ENCODE measurements at regions of chr18 and their contacts with region 1.

Region 1: DNA sequence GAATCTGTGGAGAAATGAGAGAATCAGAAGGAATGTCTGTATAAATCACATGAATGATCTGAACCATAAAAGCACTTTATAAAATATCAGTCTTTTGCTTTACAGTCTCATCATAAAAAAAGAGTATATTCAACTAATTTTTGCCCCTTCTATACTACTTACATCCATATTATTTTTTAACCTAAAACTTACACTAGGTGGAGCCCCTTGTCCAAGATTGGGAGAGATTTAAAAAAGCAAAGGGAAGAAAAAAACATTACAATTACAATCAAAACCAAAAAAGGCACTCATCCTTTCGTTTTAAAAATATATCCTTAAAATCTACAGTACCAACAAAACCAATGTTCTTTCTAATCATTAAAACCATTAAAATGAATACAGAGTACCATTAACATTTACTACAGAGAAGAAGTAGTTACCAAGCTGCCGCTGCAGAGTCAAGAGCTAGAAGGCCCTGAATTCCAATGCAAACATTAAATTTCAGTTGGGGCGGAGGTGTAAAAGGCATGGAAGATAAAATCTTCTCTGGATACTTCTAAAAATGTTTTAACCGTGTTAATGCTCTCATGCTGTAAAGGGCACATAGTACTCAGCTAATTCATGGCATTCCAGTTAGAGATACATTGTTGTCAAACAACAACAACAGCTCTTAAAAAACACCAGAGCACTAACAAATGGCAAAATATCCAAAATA is 56.7 kb upstream of the EPB41L3 start:
- DNase-seq: no peak
- H3K4me3 ChIP-seq: no peak overlapping the region
- H3K27ac ChIP-seq: no peak overlapping the region
- H3K4me1 ChIP-seq: no peaks in the 10 kb centered on the region
- H3K27me3 ChIP-seq: no peaks in the 10 kb centered on the region
- CTCF ChIP-seq: peak in 1 of 3 donors; percentile 9
- EP300 ChIP-seq: no peak
- POLR2A ChIP-seq: no peak

Region 2: DNA sequence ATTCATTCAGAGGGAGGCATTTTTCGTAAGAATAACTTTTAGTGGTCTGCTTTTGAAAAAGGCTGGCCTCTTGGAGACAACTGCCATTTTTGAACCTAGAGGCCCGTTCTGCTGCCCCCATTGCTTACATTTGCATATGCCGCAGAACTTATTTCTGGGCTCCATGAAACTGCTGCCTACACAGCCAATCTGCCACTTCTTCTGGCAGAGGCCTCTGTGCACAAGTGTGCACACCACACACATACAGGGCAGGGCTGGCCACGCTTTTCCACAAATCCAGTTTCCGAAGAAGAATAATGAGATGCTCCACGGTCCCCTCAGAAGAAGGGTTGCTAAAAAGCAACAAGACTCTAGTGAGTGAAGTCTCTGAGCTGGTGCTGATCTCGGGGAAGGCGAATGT is 238.6 kb after region 1 on chr18:
- intact Hi-C with region 1: loop called in 1 of 4 experiments (anchors 10 kb)
- DNase-seq: no peak
- H3K4me3 ChIP-seq: no peak overlapping the region
- H3K27ac ChIP-seq: no peak overlapping the region
- H3K4me1 ChIP-seq: peaks cover 3% of the 10 kb centered on the region
- H3K27me3 ChIP-seq: no peaks in the 10 kb centered on the region
- CTCF ChIP-seq: no peak
- EP300 ChIP-seq: no peak
- POLR2A ChIP-seq: no peak